HepG2 (cell line): ENCODE measurements at regions of chr18 and their contacts with region 1.

Region 1: DNA sequence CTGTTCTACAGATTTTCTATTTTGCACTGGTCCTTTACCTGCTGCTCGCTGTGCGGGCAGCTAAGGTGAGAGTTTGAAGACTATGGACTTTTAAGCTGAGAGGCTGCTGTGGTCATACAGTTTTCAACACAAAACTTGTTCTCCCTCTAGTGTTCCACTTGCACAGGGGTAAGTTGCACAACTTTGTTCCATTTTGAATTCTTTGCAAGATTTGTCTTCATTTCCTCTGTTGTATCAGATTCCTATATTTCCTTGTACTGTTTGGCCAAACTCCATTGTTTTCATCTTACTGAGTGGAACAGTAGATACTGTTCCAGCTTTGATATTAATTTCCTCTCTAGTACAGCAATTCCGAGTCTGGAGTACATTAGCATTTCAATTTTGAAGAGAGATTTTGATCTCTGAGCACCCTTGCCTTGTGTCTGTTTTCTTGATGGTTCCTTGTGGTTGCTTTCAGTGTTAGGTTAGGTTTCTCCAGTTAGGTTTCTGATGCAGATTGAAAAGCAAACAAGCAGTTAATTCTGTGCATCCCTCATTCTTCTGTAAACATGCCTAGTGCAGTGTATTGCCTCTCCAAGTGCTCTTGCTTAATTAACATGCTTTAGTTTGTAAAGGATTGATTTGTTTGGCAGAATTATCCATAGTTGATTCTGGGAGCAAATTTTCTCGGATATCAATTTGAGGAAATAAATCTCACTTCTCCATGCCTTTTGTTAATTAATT is 188.8 kb downstream of the PTPRM start:
- DNase-seq: peak; percentile 63
- ATAC-seq: peak; percentile 53
- H3K4me3 ChIP-seq: peak overlapping the region in 2 of 3 experiments; percentile 52 to 69; a peak in 3 of 6 replicates
- H3K27ac ChIP-seq: peak overlapping the region; percentile 84
- H3K4me1 ChIP-seq: peaks cover 90% of the 10 kb centered on the region
- H3K27me3 ChIP-seq: no peaks in the 10 kb centered on the region
- CTCF ChIP-seq: peak; percentile 68
- EP300 ChIP-seq: 0 out of 4 replicates have a peak, but pooled peaks of 1 of the 2 experiments have one; percentile 38
- POLR2A ChIP-seq: no peak
- RAD21 ChIP-seq: peak; percentile 53; the same call in 1 of the 2 replicates

Region 2: DNA sequence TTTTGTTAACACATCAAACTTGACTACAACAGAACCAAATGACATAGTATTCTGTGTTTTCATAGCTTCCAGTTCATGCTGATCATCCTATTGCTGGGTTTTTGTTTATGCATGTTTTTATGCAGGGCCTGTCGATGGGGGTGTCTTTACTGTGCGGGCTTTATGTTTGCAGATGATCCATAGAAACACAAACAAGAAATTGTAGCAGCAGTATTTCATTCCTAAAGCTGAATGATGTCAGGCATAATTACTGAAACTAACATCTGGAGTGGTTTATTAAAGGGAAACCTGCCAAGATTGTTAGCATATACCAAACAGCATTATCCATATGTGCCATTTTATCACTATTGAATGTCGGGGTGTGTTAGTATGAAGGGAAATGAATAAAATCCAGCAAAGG is 59.1 kb before region 1 on chr18:
- CTCF ChIA-PET with region 1: no interaction called
- POLR2A ChIA-PET with region 1: no interaction called
- in situ Hi-C with region 1: no loop called
- intact Hi-C with region 1: loop called (anchors 10 kb)
- DNase-seq: no peak
- ATAC-seq: no peak
- H3K4me3 ChIP-seq: no peak overlapping the region
- H3K27ac ChIP-seq: no peak overlapping the region
- H3K4me1 ChIP-seq: no peaks in the 10 kb centered on the region
- H3K27me3 ChIP-seq: no peaks in the 10 kb centered on the region
- CTCF ChIP-seq: no peak
- EP300 ChIP-seq: no peak
- POLR2A ChIP-seq: no peak
- RAD21 ChIP-seq: no peak

Region 3: GRCh38 chr18:7921938-7922587 is 166.1 kb after region 1 on chr18:
- CTCF ChIA-PET with region 1: no interaction called
- POLR2A ChIA-PET with region 1: no interaction called
- in situ Hi-C with region 1: no loop called
- intact Hi-C with region 1: no loop called
- DNase-seq: peak; percentile 76
- ATAC-seq: peak; percentile 77
- H3K4me3 ChIP-seq: peak overlapping the region in 1 of 3 experiments; percentile 1; a peak in 1 of 6 replicates
- H3K27ac ChIP-seq: peak overlapping the region; percentile 61
- H3K4me1 ChIP-seq: peaks cover 72% of the 10 kb centered on the region
- H3K27me3 ChIP-seq: no peaks in the 10 kb centered on the region
- CTCF ChIP-seq: no peak
- EP300 ChIP-seq: peak; percentile 55 to 83; a peak in 2 of 4 replicates
- POLR2A ChIP-seq: no peak
- RAD21 ChIP-seq: no peak

Region 4: GRCh38 chr18:8747440-8747937 is 991.6 kb after region 1 on chr18:
- CTCF ChIA-PET with region 1: no interaction called
- POLR2A ChIA-PET with region 1: no interaction called
- in situ Hi-C with region 1: no loop called
- intact Hi-C with region 1: no loop called
- DNase-seq: no peak
- ATAC-seq: no peak
- H3K4me3 ChIP-seq: no peak overlapping the region
- H3K27ac ChIP-seq: no peak overlapping the region
- H3K4me1 ChIP-seq: no peaks in the 10 kb centered on the region
- H3K27me3 ChIP-seq: peaks cover 0 to 1% of the 10 kb centered on the region in 2 experiments; a peak in 1 of 5 replicates
- CTCF ChIP-seq: no peak
- EP300 ChIP-seq: no peak
- POLR2A ChIP-seq: no peak
- RAD21 ChIP-seq: no peak